ENCODE measurements at regions of chr3 and their contacts with region 1.

Region 1: GRCh38 chr3:40679290-40679689 is 154.5 kb downstream of the ZNF621 start:
- DNase-seq: no peak
- ATAC-seq: no peak
- H3K4me3 ChIP-seq: no peak overlapping the region
- H3K27ac ChIP-seq: no peak overlapping the region
- H3K4me1 ChIP-seq: 0 out of 2 replicates have a peak, but pooled peaks cover 8% of the 10 kb centered on the region
- H3K27me3 ChIP-seq: no peaks in the 10 kb centered on the region; a peak in 1 of 5 replicates
- CTCF ChIP-seq: no peak
- EP300 ChIP-seq: no peak
- POLR2A ChIP-seq: no peak
- RAD21 ChIP-seq: no peak

Region 2: GRCh38 chr3:40736943-40737342 is 57.7 kb after region 1 on chr3:
- CTCF ChIA-PET with region 1: no interaction called
- POLR2A ChIA-PET with region 1: no interaction called
- in situ Hi-C with region 1: no loop called
- intact Hi-C with region 1: no loop called
- DNase-seq: no peak
- ATAC-seq: no peak
- H3K4me3 ChIP-seq: no peak overlapping the region
- H3K27ac ChIP-seq: no peak overlapping the region
- H3K4me1 ChIP-seq: peaks cover 4% of the 10 kb centered on the region; the same call in 1 of the 2 replicates
- H3K27me3 ChIP-seq: no peaks in the 10 kb centered on the region; a peak in 1 of 5 replicates
- CTCF ChIP-seq: no peak
- EP300 ChIP-seq: no peak
- POLR2A ChIP-seq: no peak
- RAD21 ChIP-seq: no peak

Region 3: GRCh38 chr3:41629072-41629471 is 949.8 kb after region 1 on chr3:
- CTCF ChIA-PET with region 1: no interaction called
- POLR2A ChIA-PET with region 1: no interaction called
- in situ Hi-C with region 1: no loop called
- intact Hi-C with region 1: loop called (anchors 10 kb)
- DNase-seq: no peak
- ATAC-seq: no peak
- H3K4me3 ChIP-seq: no peak overlapping the region
- H3K27ac ChIP-seq: no peak overlapping the region
- H3K4me1 ChIP-seq: peaks cover 22% of the 10 kb centered on the region
- H3K27me3 ChIP-seq: no peaks in the 10 kb centered on the region
- CTCF ChIP-seq: no peak
- EP300 ChIP-seq: no peak
- POLR2A ChIP-seq: no peak
- RAD21 ChIP-seq: no peak

Measured in HepG2 (cell line).